PC-9 (cell line): ENCODE measurements at regions of chr4 and their contacts with region 1.

Region 1: GRCh38 chr4:183229397-183229796 is 90.7 kb downstream of the CLDN22 start:
- DNase-seq: no peak
- H3K4me3 ChIP-seq: no peak overlapping the region
- H3K27ac ChIP-seq: no peak overlapping the region
- H3K4me1 ChIP-seq: no peaks in the 10 kb centered on the region
- H3K27me3 ChIP-seq: no peaks in the 10 kb centered on the region
- CTCF ChIP-seq: no peak

Region 2: DNA sequence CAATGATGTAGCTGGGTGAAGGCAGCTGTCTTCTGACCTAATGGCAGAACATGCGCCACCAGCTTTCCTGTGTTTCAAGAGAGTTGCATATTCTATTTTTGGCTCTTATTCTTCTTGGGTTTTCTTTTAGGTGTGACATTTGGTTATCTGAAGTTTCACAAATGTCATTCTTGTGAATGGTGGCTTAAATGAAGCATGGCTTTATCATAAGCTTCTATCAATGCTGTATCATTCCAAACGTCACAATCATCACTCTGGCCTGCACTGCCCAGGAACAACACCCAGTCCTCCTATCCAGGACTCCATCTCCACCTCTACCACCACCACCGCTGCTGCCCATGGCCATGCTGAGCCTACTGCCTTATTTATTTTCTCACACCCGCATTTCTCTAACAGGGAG is 200.0 kb before region 1 on chr4:
- CTCF ChIA-PET with region 1: interaction called, 16 read pairs
- POLR2A ChIA-PET with region 1: no interaction called
- intact Hi-C with region 1: no loop called
- DNase-seq: no peak
- H3K4me3 ChIP-seq: no peak overlapping the region
- H3K27ac ChIP-seq: no peak overlapping the region
- H3K4me1 ChIP-seq: no peaks in the 10 kb centered on the region
- H3K27me3 ChIP-seq: peaks cover 26% of the 10 kb centered on the region
- CTCF ChIP-seq: no peak

Region 3: DNA sequence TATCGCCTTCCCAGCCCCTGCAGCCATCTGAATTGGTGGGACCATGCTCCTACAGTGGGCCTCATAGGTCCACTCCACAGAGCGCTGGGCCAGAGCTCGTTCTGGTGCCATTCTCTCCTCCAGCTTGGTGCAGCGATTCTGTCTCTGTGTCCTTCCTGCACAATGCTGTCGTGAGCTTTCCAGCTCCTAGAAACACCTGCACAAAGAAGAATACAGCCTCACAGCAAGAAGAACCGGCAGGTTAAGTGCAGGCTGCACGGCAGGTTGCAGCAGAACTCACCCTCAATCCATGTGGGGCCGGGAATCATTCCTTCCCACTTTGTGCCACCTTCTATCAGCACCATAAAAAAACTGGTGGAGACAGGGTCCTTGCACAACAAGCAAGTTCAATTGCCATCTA is 1089.5 kb after region 1 on chr4:
- CTCF ChIA-PET with region 1: no interaction called
- POLR2A ChIA-PET with region 1: no interaction called
- intact Hi-C with region 1: no loop called
- DNase-seq: no peak
- H3K4me3 ChIP-seq: no peak overlapping the region
- H3K27ac ChIP-seq: no peak overlapping the region
- H3K4me1 ChIP-seq: peaks cover 12% of the 10 kb centered on the region
- H3K27me3 ChIP-seq: no peaks in the 10 kb centered on the region
- CTCF ChIP-seq: no peak